Activated naive CD4-positive, alpha-beta T cell treated with anti-CD3 and anti-CD28 coated beads for 36 hours (primary cell): ENCODE measurements at regions of chr13 and their contacts with region 1.

Region 1: DNA sequence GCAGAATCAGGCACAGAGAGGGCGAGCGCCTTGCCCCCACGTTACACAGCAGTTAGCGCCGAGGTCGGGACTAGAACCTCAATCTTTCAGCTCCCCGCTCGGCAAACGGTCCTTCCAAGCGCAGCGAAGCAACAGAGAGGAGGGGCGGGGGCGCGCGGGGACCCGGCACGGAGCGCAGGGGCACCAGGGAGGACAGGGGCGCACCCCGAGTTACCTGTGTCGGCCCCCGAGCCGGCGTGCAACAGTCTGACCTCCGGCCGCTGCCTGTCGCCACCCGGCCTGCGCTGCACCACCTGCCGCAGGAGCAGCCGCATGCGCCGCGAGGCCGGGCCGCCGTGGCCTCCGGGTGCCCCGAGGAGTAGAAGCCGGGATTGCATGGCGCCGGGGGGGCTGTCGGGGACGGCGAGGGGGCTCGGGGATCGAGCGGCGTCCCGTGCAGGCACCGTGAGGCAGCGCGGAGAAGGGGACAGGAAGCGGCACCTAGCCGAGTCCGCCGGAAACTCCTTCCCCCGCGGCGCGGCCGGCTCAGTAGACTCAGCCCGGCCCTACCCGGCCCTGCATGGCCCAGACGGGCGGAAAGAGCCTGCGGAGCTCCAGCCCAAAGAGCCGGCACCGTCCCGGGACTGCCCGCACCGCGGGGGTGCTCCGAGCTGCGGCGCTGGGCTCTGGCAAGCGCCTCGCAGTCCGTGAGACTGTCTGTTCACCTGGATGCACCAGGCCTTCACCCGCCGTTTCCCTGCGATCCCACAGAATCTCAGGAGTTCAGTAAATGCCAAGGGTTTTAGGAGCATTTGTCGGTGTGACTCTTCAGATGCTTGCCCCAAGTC is at the start of gene VWA8:
- DNase-seq: peak; percentile 84
- H3K4me3 Mint-ChIP-seq: peak within 1 kb of the TSS; percentile 95
- H3K27ac Mint-ChIP-seq: peak within 1 kb of the TSS; percentile 92
- H3K4me1 Mint-ChIP-seq: peaks cover 53% of the 10 kb centered on the region
- H3K27me3 Mint-ChIP-seq: no peaks in the 10 kb centered on the region
- total RNA-seq, gene VWA8: 21.2 to 21.5 TPM

Region 2: GRCh38 chr13:41492404-41493260 is 468.2 kb before region 1 on chr13:
- CTCF ChIA-PET with region 1: no interaction called
- intact Hi-C with region 1: loop called (anchors 2 kb)
- DNase-seq: peak; percentile 62
- H3K4me3 Mint-ChIP-seq: peak overlapping the region; percentile 45
- H3K27ac Mint-ChIP-seq: peak overlapping the region; percentile 95
- H3K4me1 Mint-ChIP-seq: peaks cover 91% of the 10 kb centered on the region
- H3K27me3 Mint-ChIP-seq: no peaks in the 10 kb centered on the region

Region 3: DNA sequence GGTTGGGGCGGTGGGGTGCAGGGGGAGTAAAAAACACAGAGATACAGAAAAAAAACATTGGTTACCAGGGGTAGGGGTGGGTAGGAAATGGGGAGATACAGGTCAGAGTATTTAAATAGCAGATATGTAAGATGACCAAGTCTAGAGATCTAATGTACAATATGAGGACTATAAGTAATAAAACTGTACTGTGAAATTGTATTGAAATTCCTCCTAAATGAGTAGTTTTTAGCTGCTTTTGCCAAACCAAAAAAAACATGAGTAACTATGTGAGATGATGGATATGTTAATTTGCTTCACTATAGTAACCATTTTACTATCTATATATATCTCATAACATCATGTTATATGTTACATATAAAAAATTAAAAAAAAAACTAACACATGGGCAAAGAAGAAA is 29.5 kb before region 1 on chr13:
- CTCF ChIA-PET with region 1: interaction called, 6 read pairs
- intact Hi-C with region 1: loop called (anchors 2 kb)
- DNase-seq: no peak
- H3K4me3 Mint-ChIP-seq: no peak overlapping the region
- H3K27ac Mint-ChIP-seq: peak overlapping the region; percentile 81
- H3K4me1 Mint-ChIP-seq: peaks cover 77% of the 10 kb centered on the region
- H3K27me3 Mint-ChIP-seq: no peaks in the 10 kb centered on the region

Region 4: DNA sequence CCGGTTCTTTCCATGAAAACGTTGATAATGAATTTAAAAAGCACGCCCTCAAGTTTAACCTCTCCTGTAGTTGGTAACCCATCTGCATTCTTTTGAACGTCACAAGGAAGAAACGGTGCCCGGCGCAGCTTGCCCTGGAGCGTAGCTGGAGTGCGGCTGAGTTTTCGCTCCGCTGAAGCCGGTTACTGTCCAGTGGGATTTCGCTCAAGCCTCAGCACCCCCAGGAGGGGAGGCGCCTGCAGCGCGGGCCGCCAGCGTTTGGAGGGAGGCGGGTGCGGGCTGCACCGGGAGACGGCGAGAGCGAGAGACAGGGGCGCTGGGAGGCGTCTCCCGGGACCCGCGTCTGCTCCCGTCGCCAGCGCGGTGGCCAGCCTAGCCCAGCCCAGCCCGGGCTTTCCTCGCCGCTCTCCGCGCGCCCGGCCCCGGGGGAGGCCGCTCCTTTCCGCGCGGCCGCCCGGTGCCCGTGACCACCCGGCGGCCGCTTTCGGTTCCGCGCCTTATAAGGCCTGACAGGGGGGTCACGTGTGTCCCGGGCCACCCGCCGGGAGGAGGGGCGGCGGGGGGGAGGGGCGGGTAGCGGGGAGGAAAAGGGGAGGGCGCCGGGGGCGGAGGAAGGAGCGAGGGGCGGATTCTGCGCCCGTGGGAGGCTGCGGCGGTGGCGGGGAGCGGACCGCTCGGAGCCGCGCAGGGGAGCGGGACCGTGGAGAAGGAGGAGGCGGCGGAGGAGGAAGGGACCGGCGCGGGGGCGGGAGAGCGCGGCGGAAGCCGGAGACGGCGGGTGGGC is 79.3 kb after region 1 on chr13:
- CTCF ChIA-PET with region 1: interaction called, 3 read pairs
- intact Hi-C with region 1: loop called (anchors 2 kb)
- DNase-seq: peak; percentile 86
- H3K4me3 Mint-ChIP-seq: peak overlapping the region; percentile 78
- H3K27ac Mint-ChIP-seq: peak overlapping the region; percentile 73
- H3K4me1 Mint-ChIP-seq: peaks cover 20% of the 10 kb centered on the region
- H3K27me3 Mint-ChIP-seq: no peaks in the 10 kb centered on the region

Region 5: GRCh38 chr13:42048682-42049453 is 88.0 kb after region 1 on chr13:
- CTCF ChIA-PET with region 1: interaction called, 3 read pairs
- intact Hi-C with region 1: loop called (anchors 2 kb)
- DNase-seq: peak; percentile 71
- H3K4me3 Mint-ChIP-seq: peak overlapping the region; percentile 89
- H3K27ac Mint-ChIP-seq: peak overlapping the region; percentile 78
- H3K4me1 Mint-ChIP-seq: peaks cover 21% of the 10 kb centered on the region
- H3K27me3 Mint-ChIP-seq: peaks cover 3% of the 10 kb centered on the region

Region 6: GRCh38 chr13:42283574-42283973 is 322.7 kb after region 1 on chr13:
- CTCF ChIA-PET with region 1: no interaction called
- intact Hi-C with region 1: no loop called
- DNase-seq: no peak
- H3K4me3 Mint-ChIP-seq: no peak overlapping the region
- H3K27ac Mint-ChIP-seq: no peak overlapping the region
- H3K4me1 Mint-ChIP-seq: peaks cover 29% of the 10 kb centered on the region
- H3K27me3 Mint-ChIP-seq: no peaks in the 10 kb centered on the region